ENCODE measurements at regions of chr6 and their contacts with region 1.

Region 1: GRCh38 chr6:26312501-26313390 is 52.3 kb upstream of the BTN3A2 start:
- DNase-seq: peak; percentile 81
- H3K4me3 ChIP-seq: peak overlapping the region; percentile 60 to 89 (median 70)
- H3K27ac ChIP-seq: peak overlapping the region; percentile 58
- H3K4me1 ChIP-seq: peaks cover 28% of the 10 kb centered on the region
- H3K27me3 ChIP-seq: no peaks in the 10 kb centered on the region
- CTCF ChIP-seq: no peak

Region 2: DNA sequence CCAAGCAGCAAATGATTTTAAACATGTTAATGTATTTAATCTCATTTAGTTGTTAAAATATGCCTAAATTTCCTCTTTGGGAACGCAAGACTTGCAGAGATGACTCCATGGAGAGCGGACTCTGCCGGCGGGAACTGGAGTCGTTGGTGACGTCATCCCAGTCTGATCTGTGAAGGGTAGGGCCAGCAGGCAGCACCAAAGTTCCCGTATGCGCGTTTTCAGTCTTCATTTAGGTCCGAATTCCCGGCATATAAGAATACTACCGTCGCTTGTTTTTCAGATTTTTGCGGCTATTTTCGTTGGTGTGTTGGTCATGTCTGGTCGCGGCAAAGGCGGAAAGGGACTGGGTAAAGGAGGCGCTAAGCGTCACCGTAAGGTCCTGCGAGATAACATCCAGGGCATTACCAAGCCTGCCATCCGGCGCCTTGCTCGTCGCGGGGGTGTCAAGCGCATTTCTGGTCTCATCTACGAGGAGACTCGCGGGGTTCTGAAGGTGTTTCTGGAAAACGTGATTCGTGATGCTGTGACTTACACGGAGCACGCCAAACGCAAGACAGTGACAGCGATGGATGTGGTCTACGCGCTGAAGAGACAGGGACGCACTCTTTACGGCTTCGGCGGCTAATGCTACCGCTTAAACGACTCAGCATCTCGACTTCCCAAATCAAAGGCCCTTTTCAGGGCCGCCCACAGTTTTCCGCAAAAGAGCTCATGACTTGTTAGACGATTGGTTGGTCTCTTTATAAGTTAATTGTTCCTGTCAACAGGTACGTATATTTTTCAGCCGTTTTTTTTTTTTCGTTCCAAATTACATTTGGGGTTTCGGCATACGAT is 108.2 kb before region 1 on chr6:
- CTCF ChIA-PET with region 1: no interaction called
- dilution Hi-C with region 1: no loop called
- in situ Hi-C with region 1: loop called in 1 of 2 experiments (anchors 10 kb)
- intact Hi-C with region 1: no loop called
- DNase-seq: peak; percentile 95
- H3K4me3 ChIP-seq: peak overlapping the region; percentile 67 to 73 (median 71)
- H3K27ac ChIP-seq: peak overlapping the region; percentile 97
- H3K4me1 ChIP-seq: peaks cover 19% of the 10 kb centered on the region
- H3K27me3 ChIP-seq: no peaks in the 10 kb centered on the region
- CTCF ChIP-seq: peak; percentile 11 to 36

Region 3: DNA sequence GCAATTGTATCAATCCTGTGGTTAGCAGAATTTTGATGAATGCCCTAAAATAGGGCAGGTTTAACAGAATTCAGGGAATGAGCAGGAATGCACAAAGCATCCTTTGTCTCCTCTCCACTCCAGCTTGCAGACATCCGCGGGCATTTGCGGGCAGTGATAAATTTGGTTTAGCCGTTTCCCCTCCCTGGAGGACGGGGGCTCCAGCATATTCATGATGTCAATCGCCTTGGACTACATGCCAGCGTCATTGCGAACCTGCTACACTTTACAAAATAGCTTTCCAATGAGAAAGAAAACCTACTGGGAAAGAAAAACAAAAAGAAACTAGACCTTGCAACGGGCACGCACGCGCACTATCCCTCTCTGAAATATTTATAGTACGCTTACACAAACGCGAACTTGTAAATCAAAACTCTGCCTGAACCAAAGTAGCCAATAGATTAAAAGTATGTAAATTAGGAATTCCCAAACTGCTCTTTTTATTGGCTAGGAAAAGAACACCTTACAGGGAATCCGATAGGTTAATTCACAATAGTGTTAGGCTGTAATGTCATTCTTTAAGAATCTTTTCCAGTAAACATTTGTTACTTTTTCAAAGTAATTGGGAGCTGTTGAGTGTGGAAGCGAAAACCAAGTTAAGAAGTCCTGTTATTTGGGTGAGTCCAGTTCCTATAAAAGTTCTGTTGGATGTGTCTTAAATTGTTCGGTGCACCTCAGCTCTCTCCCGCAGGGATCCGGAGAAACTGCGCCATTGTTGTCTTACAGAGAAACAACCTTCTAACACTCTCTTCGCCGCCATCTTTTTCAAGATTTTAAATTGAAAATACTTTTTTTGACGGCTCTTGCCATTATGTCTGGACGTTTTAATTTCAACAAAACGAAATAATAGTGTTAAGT is 88.8 kb before region 1 on chr6:
- CTCF ChIA-PET with region 1: interaction called, 3 read pairs
- dilution Hi-C with region 1: no loop called
- in situ Hi-C with region 1: no loop called
- intact Hi-C with region 1: loop called (anchors 1 kb)
- DNase-seq: peak; percentile 91
- H3K4me3 ChIP-seq: peak overlapping the region; percentile 57 to 76 (median 68)
- H3K27ac ChIP-seq: peak overlapping the region; percentile 98
- H3K4me1 ChIP-seq: peaks cover 8% of the 10 kb centered on the region
- H3K27me3 ChIP-seq: no peaks in the 10 kb centered on the region
- CTCF ChIP-seq: no peak

Region 4: DNA sequence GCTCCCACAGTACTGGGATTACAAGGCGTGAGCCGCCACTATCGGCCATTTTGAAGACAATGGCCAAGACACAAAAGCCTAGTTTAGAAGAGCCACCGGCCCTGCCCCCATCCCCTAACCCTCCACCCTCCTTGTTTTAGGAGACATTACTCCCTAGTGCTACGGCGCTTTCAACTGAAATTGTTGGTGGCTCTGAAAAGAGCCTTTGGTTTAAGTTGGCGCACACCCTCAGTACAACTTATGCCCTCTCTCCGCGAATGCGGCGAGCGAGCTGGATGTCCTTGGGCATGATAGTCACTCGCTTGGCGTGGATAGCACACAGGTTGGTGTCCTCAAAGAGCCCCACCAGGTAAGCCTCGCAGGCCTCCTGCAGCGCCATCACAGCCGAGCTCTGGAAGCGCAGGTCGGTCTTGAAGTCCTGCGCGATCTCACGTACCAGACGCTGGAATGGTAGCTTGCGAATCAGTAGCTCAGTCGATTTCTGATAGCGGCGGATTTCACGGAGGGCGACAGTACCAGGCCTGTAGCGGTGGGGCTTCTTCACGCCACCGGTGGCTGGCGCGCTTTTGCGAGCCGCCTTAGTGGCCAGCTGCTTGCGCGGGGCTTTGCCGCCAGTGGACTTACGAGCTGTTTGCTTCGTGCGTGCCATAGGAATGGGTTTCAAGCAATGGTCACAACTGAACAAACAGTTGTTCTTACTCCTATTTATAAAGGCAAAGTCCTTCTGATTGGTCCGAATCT is 62.6 kb before region 1 on chr6:
- CTCF ChIA-PET with region 1: no interaction called
- dilution Hi-C with region 1: no loop called
- in situ Hi-C with region 1: no loop called
- intact Hi-C with region 1: loop called (anchors 1 kb)
- DNase-seq: peak; percentile 84
- H3K4me3 ChIP-seq: peak overlapping the region; percentile 62 to 71 (median 69)
- H3K27ac ChIP-seq: peak overlapping the region; percentile 53
- H3K4me1 ChIP-seq: peaks cover 8% of the 10 kb centered on the region
- H3K27me3 ChIP-seq: no peaks in the 10 kb centered on the region
- CTCF ChIP-seq: peak; percentile 37 to 68

Region 5: GRCh38 chr6:26322645-26323482 is 10.1 kb after region 1 on chr6:
- CTCF ChIA-PET with region 1: no interaction called
- dilution Hi-C with region 1: no loop called
- in situ Hi-C with region 1: no loop called
- intact Hi-C with region 1: loop called (anchors 1 kb)
- DNase-seq: peak; percentile 90
- H3K4me3 ChIP-seq: peak overlapping the region; percentile 54 to 87 (median 60)
- H3K27ac ChIP-seq: peak overlapping the region; percentile 34
- H3K4me1 ChIP-seq: no peaks in the 10 kb centered on the region
- H3K27me3 ChIP-seq: no peaks in the 10 kb centered on the region
- CTCF ChIP-seq: no peak